Left ventricle myocardium inferior (tissue), 1 donor: ENCODE measurements at regions of chr22 and their contacts with region 1.

Region 1: GRCh38 chr22:17057959-17058814 is 26.6 kb upstream of the IL17RA start:
- DNase-seq: no peak
- H3K4me3 ChIP-seq: no peak overlapping the region
- H3K27ac ChIP-seq: no peak overlapping the region
- H3K4me1 ChIP-seq: peaks cover 5% of the 10 kb centered on the region
- H3K27me3 ChIP-seq: peaks cover 9% of the 10 kb centered on the region
- CTCF ChIP-seq: peak; percentile 96

Region 2: GRCh38 chr22:16917144-16918003 is 140.8 kb before region 1 on chr22:
- intact Hi-C with region 1: loop called (anchors 5 kb)
- DNase-seq: peak; percentile 51
- H3K4me3 ChIP-seq: no peak overlapping the region
- H3K27ac ChIP-seq: no peak overlapping the region
- H3K4me1 ChIP-seq: no peaks in the 10 kb centered on the region
- H3K27me3 ChIP-seq: peaks cover 97% of the 10 kb centered on the region
- CTCF ChIP-seq: peak; percentile 70

Region 3: DNA sequence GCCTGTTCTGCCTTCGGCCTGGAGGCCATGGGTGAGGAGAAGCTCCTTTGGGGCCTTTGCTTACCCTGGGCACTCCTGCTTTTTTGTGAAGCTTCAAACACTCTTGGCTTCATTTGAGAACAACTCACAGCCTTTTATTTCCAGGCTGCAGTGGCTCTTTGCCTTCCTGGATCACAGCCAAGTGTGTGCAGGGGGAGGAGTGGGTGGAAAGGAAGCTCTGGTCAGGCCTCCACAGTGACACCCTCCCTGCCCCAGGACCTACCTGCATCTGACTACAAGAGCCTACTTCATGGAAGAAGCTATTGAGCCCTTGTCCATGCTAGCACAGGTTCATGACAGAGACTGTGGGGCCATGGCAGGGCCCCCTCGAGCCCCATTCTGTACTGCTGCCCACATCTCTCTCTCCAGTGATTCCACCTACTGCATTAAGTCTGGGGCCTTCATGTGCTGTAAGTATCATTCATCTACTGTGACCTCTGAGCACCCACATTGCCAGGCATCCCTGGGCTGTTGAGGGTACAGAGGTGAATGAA is 102.4 kb before region 1 on chr22:
- intact Hi-C with region 1: no loop called
- DNase-seq: no peak
- H3K4me3 ChIP-seq: no peak overlapping the region
- H3K27ac ChIP-seq: no peak overlapping the region
- H3K4me1 ChIP-seq: no peaks in the 10 kb centered on the region
- H3K27me3 ChIP-seq: peaks cover 27% of the 10 kb centered on the region
- CTCF ChIP-seq: no peak

Region 4: DNA sequence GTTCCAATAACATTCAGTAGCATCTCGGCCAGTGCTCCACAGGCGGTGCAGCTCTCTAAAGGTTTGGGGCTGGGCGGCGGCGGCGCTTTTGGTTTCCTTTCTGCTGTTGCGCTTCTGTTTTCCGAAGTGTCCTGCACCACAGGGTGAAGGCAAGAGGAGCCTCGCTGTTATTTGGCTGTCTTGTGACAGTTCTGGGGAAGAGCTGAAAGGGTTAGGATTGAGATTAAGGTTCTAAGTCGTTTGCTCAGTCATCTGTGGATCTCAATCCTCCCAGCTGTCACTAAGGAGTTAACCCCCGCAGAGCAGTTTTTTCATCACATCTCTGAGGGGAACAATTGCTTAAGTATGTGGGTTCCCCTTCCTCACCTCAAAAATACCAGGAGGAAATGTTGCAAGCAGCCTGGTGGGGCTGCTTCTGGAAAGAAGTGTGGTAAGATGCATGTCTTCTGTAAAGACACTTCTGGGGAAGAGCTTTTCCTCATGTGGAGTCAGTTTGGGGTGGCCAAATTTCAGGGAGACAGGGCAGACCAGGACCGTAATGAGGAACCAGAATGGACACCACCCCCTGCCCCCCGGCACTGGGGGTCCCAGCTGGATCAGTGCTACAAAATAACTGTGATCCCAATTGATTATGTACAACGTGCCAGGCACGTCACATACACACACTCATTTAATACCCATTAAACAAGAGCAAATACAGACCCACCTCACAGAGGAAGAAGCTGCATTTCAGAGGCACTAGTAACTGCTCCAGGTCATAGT is 48.8 kb after region 1 on chr22:
- intact Hi-C with region 1: no loop called
- DNase-seq: no peak
- H3K4me3 ChIP-seq: no peak overlapping the region
- H3K27ac ChIP-seq: peak overlapping the region; percentile 25
- H3K4me1 ChIP-seq: no peaks in the 10 kb centered on the region
- H3K27me3 ChIP-seq: no peaks in the 10 kb centered on the region
- CTCF ChIP-seq: no peak

Region 5: DNA sequence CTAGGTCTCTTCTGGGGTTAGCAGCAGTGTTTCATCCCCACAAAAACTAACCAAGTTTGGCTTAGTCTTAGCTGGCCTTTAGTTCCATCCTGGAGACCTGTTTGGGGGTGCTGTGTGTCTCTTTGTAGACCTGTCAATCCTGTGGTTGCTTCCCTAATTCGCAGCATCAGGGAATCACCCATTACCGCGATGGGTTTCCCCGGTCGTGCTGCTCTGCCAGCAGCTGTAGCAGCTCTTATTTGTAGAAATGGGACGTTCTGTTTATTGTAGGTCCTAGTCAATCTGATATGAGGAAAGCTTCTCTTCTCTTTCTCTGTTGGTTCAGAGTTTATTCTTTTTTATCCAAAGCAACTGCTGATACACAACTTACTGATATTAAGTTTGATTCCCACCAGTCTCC is 402.7 kb after region 1 on chr22:
- intact Hi-C with region 1: no loop called
- DNase-seq: no peak
- H3K4me3 ChIP-seq: no peak overlapping the region
- H3K27ac ChIP-seq: no peak overlapping the region
- H3K4me1 ChIP-seq: no peaks in the 10 kb centered on the region
- H3K27me3 ChIP-seq: no peaks in the 10 kb centered on the region
- CTCF ChIP-seq: no peak